ENCODE measurements at regions of chr13 and their contacts with region 1.

Region 1: GRCh38 chr13:46146899-46147298 is 35.1 kb downstream of the LCP1 start:
- DNase-seq: no peak
- ATAC-seq: no peak
- H3K4me3 ChIP-seq: no peak overlapping the region
- H3K4me3 Mint-ChIP-seq: no peak overlapping the region
- H3K27ac ChIP-seq: no peak overlapping the region
- H3K27ac Mint-ChIP-seq: no peak overlapping the region
- H3K4me1 ChIP-seq: peaks cover 7% of the 10 kb centered on the region
- H3K4me1 Mint-ChIP-seq: peaks cover 29% of the 10 kb centered on the region
- H3K27me3 ChIP-seq: no peaks in the 10 kb centered on the region
- H3K27me3 Mint-ChIP-seq: no peaks in the 10 kb centered on the region
- CTCF ChIP-seq: no peak

Region 2: DNA sequence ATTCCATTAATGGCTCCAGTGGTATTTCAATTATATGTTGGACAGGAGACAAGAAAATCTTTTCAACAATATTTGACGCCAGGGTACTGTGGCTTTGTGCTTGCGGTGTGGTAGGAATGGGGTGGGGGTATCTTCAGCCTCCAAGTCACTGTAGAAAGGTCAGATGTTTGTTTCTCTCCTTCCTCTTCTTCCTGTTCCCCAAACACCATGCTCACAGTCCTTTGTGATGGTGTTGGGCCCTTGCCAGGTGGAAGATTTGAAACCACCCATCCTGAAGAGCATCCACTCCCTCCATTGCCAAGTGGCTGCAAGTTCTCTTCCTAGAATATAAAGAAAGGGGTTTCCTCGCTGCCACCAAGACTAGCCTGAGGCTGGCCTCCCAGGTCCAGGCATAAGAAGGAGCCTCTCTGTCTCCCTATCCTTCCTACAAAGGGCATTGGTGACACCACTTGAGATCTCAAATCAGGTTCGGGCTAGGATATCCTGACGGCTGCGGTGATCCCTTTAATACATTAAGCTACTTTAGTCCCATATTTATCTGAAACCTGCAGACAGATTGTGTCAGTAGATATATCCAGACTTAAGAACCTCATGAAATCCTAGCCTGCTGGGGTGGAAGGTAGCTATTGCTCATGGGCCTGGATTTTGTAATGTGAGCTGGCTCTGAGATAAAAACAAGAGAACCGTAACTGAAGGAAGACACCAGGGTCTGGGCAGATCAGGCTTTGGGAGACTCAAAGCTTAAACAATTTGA is 231.0 kb before region 1 on chr13:
- CTCF ChIA-PET with region 1: no interaction called
- POLR2A ChIA-PET with region 1: no interaction called
- intact Hi-C with region 1: no loop called
- DNase-seq: no peak
- ATAC-seq: no peak
- H3K4me3 ChIP-seq: no peak overlapping the region
- H3K4me3 Mint-ChIP-seq: no peak overlapping the region
- H3K27ac ChIP-seq: no peak overlapping the region
- H3K27ac Mint-ChIP-seq: no peak overlapping the region
- H3K4me1 ChIP-seq: no peaks in the 10 kb centered on the region
- H3K4me1 Mint-ChIP-seq: no peaks in the 10 kb centered on the region
- H3K27me3 ChIP-seq: no peaks in the 10 kb centered on the region
- H3K27me3 Mint-ChIP-seq: no peaks in the 10 kb centered on the region
- CTCF ChIP-seq: no peak

Region 3: DNA sequence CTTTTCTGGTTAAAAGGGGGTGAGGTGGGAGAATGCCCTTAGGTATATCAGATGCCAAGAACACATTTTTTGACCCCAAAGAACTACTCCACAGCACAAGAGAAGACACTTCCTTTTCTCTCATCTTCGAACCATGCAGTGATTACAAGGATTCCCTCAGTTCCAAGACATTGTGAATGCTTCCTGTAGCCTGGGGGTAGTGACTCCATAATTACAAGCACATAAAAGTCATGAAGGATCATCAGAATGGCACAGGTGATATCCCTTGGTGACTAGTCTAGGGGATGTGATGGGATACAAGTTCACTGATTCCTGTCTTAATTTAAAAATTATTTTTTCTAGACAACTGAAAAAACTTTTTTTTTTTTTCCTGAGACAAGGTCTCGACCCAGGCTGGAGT is 172.4 kb before region 1 on chr13:
- CTCF ChIA-PET with region 1: no interaction called
- POLR2A ChIA-PET with region 1: no interaction called
- intact Hi-C with region 1: loop called in 1 of 2 experiments (anchors 10 kb)
- DNase-seq: no peak
- ATAC-seq: no peak
- H3K4me3 ChIP-seq: no peak overlapping the region
- H3K4me3 Mint-ChIP-seq: no peak overlapping the region
- H3K27ac ChIP-seq: no peak overlapping the region
- H3K27ac Mint-ChIP-seq: no peak overlapping the region
- H3K4me1 ChIP-seq: no peaks in the 10 kb centered on the region
- H3K4me1 Mint-ChIP-seq: peaks cover 6% of the 10 kb centered on the region
- H3K27me3 ChIP-seq: no peaks in the 10 kb centered on the region
- H3K27me3 Mint-ChIP-seq: no peaks in the 10 kb centered on the region
- CTCF ChIP-seq: no peak

Region 4: GRCh38 chr13:46134961-46135522 is 11.9 kb before region 1 on chr13:
- CTCF ChIA-PET with region 1: interaction called, 8 read pairs
- POLR2A ChIA-PET with region 1: interaction called, 3 read pairs
- intact Hi-C with region 1: loop called (anchors 2 kb)
- DNase-seq: no peak
- ATAC-seq: no peak
- H3K4me3 ChIP-seq: no peak overlapping the region
- H3K4me3 Mint-ChIP-seq: no peak overlapping the region
- H3K27ac ChIP-seq: peak overlapping the region in 1 of 2 experiments; percentile 24
- H3K27ac Mint-ChIP-seq: peak overlapping the region; percentile 84
- H3K4me1 ChIP-seq: no peaks in the 10 kb centered on the region
- H3K4me1 Mint-ChIP-seq: peaks cover 30% of the 10 kb centered on the region
- H3K27me3 ChIP-seq: no peaks in the 10 kb centered on the region
- H3K27me3 Mint-ChIP-seq: no peaks in the 10 kb centered on the region
- CTCF ChIP-seq: no peak

Region 5: DNA sequence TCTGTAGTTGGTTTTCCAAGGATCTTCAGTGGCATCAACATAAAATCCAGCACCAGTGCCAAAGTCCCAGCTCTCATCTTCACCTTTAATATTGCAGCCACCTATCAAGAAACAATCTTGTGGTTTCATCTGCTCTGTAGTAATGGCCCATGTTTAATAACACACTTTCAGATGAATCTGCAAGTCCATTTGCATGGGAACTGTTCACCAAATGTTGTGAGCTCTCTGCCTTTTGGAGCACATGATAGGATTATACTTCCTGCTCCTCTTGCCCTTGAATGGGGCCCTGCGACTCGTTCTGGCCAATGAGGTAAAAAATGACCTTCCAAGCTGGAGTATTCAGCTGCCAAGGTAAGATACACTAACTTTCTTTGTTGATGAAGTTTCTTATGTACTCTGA is 635.8 kb after region 1 on chr13:
- CTCF ChIA-PET with region 1: no interaction called
- POLR2A ChIA-PET with region 1: no interaction called
- intact Hi-C with region 1: loop called in 1 of 2 experiments (anchors 10 kb)
- DNase-seq: no peak
- ATAC-seq: no peak
- H3K4me3 ChIP-seq: no peak overlapping the region
- H3K4me3 Mint-ChIP-seq: no peak overlapping the region
- H3K27ac ChIP-seq: no peak overlapping the region
- H3K27ac Mint-ChIP-seq: no peak overlapping the region
- H3K4me1 ChIP-seq: no peaks in the 10 kb centered on the region
- H3K4me1 Mint-ChIP-seq: peaks cover 2% of the 10 kb centered on the region
- H3K27me3 ChIP-seq: no peaks in the 10 kb centered on the region
- H3K27me3 Mint-ChIP-seq: no peaks in the 10 kb centered on the region
- CTCF ChIP-seq: no peak

Measured in CD8-positive, alpha-beta T cell (primary cell).